ENCODE measurements at regions of chr1 and their contacts with region 1.

Region 1: GRCh38 chr1:29181413-29182225 is at the start of gene SRSF4:
- DNase-seq: peak; percentile 96 to 99 (median 99)
- ATAC-seq: peak; percentile 97
- H3K4me3 ChIP-seq: peak within 1 kb of the TSS; percentile 99
- H3K4me3 Mint-ChIP-seq: peak within 1 kb of the TSS; percentile 88 to 98 (median 94)
- H3K27ac ChIP-seq: peak within 1 kb of the TSS; percentile 98
- H3K27ac Mint-ChIP-seq: peak within 1 kb of the TSS; percentile 88 to 98 (median 94)
- H3K4me1 ChIP-seq: peaks cover 26 to 29% of the 10 kb centered on the region in 2 donors
- H3K4me1 Mint-ChIP-seq: peaks cover 32 to 56% (median 50%) of the 10 kb centered on the region in 7 donors
- H3K27me3 ChIP-seq: no peaks in the 10 kb centered on the region
- H3K27me3 Mint-ChIP-seq: no peaks in the 10 kb centered on the region
- total RNA-seq, gene SRSF4: 77.6 to 110 (median 79.9) TPM

Region 2: GRCh38 chr1:28505406-28506187 is 676.0 kb before region 1 on chr1 and contains the start of gene RCC1:
- CTCF ChIA-PET with region 1: no interaction called
- POLR2A ChIA-PET with region 1: interaction called, 4 read pairs
- intact Hi-C with region 1: loop called in 1 of 2 experiments (anchors 5 kb)
- DNase-seq: peak; percentile 78 to 98 (median 96)
- ATAC-seq: peak; percentile 97
- H3K4me3 ChIP-seq: peak within 1 kb of the TSS; percentile 79
- H3K4me3 Mint-ChIP-seq: peak within 1 kb of the TSS; percentile 94 to 100 (median 99)
- H3K27ac ChIP-seq: peak within 1 kb of the TSS; percentile 88
- H3K27ac Mint-ChIP-seq: peak within 1 kb of the TSS; percentile 96 to 100 (median 99)
- H3K4me1 ChIP-seq: peaks cover 29 to 36% of the 10 kb centered on the region in 2 donors
- H3K4me1 Mint-ChIP-seq: peaks cover 29 to 48% (median 41%) of the 10 kb centered on the region in 7 donors
- H3K27me3 ChIP-seq: no peaks in the 10 kb centered on the region
- H3K27me3 Mint-ChIP-seq: peaks cover 0 to 3% (median 0%) of the 10 kb centered on the region in 5 donors
- total RNA-seq, gene RCC1: 9.8 to 60.7 (median 19.7) TPM

Region 3: DNA sequence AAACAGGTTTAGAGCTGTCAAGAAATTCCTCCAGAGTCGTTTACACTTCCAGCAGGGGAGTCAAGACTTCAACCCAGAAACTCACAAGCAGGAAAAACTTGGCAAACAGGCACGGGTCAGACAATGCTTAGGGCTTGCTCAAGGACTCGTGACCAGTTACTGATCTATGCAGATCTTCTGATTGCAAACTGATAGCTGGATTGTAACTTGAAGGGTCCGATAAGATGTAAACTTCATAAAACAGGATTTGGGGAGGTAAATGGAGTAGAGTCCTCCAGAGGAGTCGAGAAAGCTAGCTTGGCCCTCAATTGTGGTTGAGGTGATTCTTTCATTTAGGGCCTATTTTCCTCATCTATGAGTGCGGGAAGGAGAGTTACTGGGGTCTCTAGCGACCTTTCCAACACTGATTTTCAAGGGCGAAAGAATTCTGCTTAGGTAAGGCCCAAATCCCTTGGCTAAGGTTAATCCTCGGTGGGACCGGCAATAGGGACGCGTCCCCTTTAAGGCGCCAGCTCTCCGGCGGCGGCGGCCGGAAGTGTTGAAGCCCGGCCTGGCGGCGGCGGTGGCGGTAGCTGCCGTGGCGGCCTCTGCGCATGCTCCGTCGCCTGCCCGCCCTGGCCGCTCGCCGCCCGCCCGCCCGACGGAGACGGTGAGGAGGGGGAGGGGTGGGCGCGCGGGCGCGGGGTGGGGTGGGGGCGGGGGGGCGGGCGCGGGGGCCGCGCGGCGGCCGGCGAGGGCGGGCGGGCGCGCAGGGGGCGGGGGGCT is 513.2 kb before region 1 on chr1 and contains the start of gene GMEB1:
- CTCF ChIA-PET with region 1: no interaction called
- POLR2A ChIA-PET with region 1: interaction called, 5 read pairs
- intact Hi-C with region 1: loop called in 1 of 2 experiments (anchors 5 kb)
- DNase-seq: peak; percentile 70 to 91 (median 82)
- ATAC-seq: peak; percentile 81
- H3K4me3 ChIP-seq: peak within 1 kb of the TSS; percentile 81
- H3K4me3 Mint-ChIP-seq: peak within 1 kb of the TSS; percentile 89 to 97 (median 94)
- H3K27ac ChIP-seq: peak within 1 kb of the TSS; percentile 98
- H3K27ac Mint-ChIP-seq: peak within 1 kb of the TSS; percentile 94 to 100 (median 98)
- H3K4me1 ChIP-seq: peaks cover 3 to 6% of the 10 kb centered on the region in 2 donors
- H3K4me1 Mint-ChIP-seq: peaks cover 11 to 37% (median 25%) of the 10 kb centered on the region in 7 donors
- H3K27me3 ChIP-seq: no peaks in the 10 kb centered on the region
- H3K27me3 Mint-ChIP-seq: no peaks in the 10 kb centered on the region
- total RNA-seq, gene GMEB1: 15.8 to 26.7 (median 18.4) TPM

Region 4: GRCh38 chr1:28914228-28915030 is 267.2 kb before region 1 on chr1 and contains the start of gene EPB41:
- CTCF ChIA-PET with region 1: no interaction called
- POLR2A ChIA-PET with region 1: interaction called, 16 read pairs
- intact Hi-C with region 1: no loop called
- DNase-seq: peak; percentile 81 to 94 (median 87)
- ATAC-seq: peak; percentile 94
- H3K4me3 ChIP-seq: peak within 1 kb of the TSS; percentile 91
- H3K4me3 Mint-ChIP-seq: peak within 1 kb of the TSS; percentile 95 to 100 (median 99)
- H3K27ac ChIP-seq: peak within 1 kb of the TSS; percentile 73
- H3K27ac Mint-ChIP-seq: peak within 1 kb of the TSS; percentile 87 to 97 (median 96)
- H3K4me1 ChIP-seq: peaks cover 34 to 37% of the 10 kb centered on the region in 2 donors
- H3K4me1 Mint-ChIP-seq: peaks cover 32 to 51% (median 39%) of the 10 kb centered on the region in 7 donors
- H3K27me3 ChIP-seq: no peaks in the 10 kb centered on the region
- H3K27me3 Mint-ChIP-seq: no peaks in the 10 kb centered on the region
- total RNA-seq, gene EPB41: 150 to 325 (median 175) TPM

Region 5: DNA sequence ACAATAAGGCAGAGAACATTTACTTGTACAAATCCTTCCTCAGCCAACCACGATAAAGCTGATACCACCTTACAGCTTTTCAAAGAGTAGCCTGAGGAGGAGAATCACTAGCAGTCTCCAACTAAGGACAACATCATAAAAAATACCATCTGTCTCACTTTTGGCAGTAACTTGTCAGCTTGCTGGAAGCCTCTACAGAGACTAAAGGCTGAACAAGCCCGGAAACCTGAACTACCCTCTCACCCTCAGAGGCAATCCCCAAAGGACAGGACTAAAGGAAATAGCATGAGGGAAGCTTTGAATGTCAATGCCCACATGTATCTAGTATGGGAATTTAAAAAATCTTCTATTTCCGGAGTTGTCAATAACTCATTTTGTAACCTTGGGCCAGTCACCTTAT is 10.5 kb before region 1 on chr1:
- CTCF ChIA-PET with region 1: interaction called, 3 read pairs
- POLR2A ChIA-PET with region 1: interaction called, 14 read pairs
- intact Hi-C with region 1: loop called in 1 of 2 experiments (anchors 2 kb)
- DNase-seq: no peak
- ATAC-seq: no peak
- H3K4me3 ChIP-seq: no peak overlapping the region
- H3K4me3 Mint-ChIP-seq: peak overlapping the region; percentile 30 to 67 (median 54)
- H3K27ac ChIP-seq: no peak overlapping the region
- H3K27ac Mint-ChIP-seq: peak overlapping the region in 7 of 9 donors; percentile 1 to 91 (median 77)
- H3K4me1 ChIP-seq: peaks cover 31 to 35% of the 10 kb centered on the region in 2 donors
- H3K4me1 Mint-ChIP-seq: peaks cover 46 to 78% (median 68%) of the 10 kb centered on the region in 7 donors
- H3K27me3 ChIP-seq: no peaks in the 10 kb centered on the region
- H3K27me3 Mint-ChIP-seq: no peaks in the 10 kb centered on the region

Region 6: DNA sequence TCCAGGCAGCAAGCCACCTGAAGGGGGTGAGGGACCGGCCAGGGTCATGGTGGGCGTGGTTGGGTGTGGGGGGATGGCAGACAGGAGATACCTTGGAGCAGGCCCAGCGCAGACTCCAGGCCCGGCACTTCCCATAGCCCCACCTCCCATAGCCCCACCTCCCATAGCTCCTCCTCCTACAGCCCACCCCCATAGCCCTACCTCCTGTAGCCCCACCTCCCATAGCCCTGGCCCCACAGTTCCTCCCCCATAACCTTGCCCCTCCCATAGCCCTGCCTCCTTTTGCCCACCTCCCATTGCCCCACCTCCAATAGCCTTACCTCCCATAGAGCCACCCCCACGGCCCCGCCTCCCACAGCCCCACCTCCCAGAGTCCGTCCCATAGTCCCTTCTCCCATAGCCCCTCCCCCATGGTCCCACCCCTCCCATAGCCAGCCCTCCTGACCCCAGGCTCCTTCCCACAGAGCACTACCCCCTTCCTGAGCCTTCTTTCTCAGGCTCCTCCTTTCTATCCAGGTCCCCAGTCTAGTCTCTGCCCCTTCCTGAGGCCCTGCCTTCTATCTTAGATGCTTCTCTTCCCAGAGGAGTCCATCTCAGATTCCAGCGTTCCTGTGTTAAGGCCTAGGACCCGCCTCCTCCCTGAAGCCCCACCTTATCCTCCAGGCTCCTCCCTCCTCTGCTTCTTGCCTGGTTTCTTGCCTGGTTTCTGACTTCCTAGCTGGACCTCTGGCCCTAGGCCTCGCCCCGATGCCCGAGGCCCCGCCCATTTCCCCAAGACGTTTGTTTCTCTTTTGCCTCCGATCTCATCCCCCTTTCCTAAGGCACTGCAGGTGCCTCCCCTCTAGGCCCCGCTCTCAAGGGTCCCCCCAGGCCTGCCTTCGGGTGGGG is 101.5 kb after region 1 on chr1:
- CTCF ChIA-PET with region 1: no interaction called
- POLR2A ChIA-PET with region 1: no interaction called
- intact Hi-C with region 1: no loop called
- DNase-seq: no peak
- ATAC-seq: peak; percentile 45
- H3K4me3 ChIP-seq: no peak overlapping the region
- H3K4me3 Mint-ChIP-seq: peak overlapping the region in 8 of 10 donors; percentile 8 to 70 (median 30)
- H3K27ac ChIP-seq: no peak overlapping the region
- H3K27ac Mint-ChIP-seq: no peak overlapping the region
- H3K4me1 ChIP-seq: no peaks in the 10 kb centered on the region
- H3K4me1 Mint-ChIP-seq: peaks cover 0 to 11% (median 4%) of the 10 kb centered on the region in 7 donors
- H3K27me3 ChIP-seq: no peaks in the 10 kb centered on the region
- H3K27me3 Mint-ChIP-seq: peaks cover 0 to 9% (median 3%) of the 10 kb centered on the region in 5 donors

Region 7: DNA sequence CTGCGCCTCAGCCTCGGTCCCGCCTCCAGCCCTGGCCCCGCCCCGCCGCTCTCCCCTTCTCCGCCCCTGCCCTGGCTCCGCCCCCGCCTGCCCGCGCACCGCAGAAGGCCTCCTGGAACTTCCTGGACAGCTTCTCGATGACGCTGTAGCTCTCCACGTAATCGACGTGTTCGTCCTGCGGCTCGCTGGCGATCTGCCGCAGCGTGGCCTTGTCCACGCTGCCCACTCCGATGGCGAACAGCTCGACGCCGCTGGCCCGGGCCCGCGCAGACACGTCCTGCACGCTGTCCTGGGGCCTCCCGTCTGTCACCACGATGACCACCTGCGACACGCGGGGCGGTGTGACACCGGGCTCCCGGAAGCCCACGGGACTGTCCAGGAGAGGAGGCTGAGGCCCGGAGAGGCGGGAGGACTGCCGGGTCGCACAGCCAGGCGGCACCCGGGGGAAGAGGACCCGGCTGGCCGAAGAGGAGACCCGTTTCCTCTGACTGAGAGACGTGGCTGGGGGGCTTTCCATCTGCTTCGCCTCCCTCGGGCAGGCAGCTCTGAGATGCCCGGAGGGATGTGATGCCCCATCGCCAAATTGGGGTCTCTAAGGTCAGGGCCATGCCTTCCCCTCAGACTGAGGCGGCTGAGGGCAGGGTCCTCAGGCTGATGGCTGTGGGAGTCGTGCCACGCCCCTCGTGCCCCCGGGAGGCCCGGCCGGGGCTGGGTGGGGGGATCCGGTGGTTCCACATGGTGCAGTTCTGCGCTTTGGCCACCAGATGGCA is 1537.2 kb after region 1 on chr1:
- CTCF ChIA-PET with region 1: interaction called, 3 read pairs
- POLR2A ChIA-PET with region 1: no interaction called
- intact Hi-C with region 1: loop called in 1 of 2 experiments (anchors 5 kb)
- DNase-seq: peak; percentile 75 to 97 (median 96)
- ATAC-seq: peak; percentile 78
- H3K4me3 ChIP-seq: peak overlapping the region; percentile 88
- H3K4me3 Mint-ChIP-seq: peak overlapping the region; percentile 83 to 96 (median 91)
- H3K27ac ChIP-seq: peak overlapping the region; percentile 100
- H3K27ac Mint-ChIP-seq: peak overlapping the region; percentile 86 to 97 (median 94)
- H3K4me1 ChIP-seq: peaks cover 10 to 37% of the 10 kb centered on the region in 2 donors
- H3K4me1 Mint-ChIP-seq: peaks cover 18 to 49% (median 38%) of the 10 kb centered on the region in 7 donors
- H3K27me3 ChIP-seq: no peaks in the 10 kb centered on the region
- H3K27me3 Mint-ChIP-seq: no peaks in the 10 kb centered on the region

Measured in naive thymus-derived CD4-positive, alpha-beta T cell (primary cell).